Activated B cell treated with CpG ODN at 0.5 μM for 24 hours (primary cell): ENCODE measurements at regions of chr17 and their contacts with region 1.

Region 1: DNA sequence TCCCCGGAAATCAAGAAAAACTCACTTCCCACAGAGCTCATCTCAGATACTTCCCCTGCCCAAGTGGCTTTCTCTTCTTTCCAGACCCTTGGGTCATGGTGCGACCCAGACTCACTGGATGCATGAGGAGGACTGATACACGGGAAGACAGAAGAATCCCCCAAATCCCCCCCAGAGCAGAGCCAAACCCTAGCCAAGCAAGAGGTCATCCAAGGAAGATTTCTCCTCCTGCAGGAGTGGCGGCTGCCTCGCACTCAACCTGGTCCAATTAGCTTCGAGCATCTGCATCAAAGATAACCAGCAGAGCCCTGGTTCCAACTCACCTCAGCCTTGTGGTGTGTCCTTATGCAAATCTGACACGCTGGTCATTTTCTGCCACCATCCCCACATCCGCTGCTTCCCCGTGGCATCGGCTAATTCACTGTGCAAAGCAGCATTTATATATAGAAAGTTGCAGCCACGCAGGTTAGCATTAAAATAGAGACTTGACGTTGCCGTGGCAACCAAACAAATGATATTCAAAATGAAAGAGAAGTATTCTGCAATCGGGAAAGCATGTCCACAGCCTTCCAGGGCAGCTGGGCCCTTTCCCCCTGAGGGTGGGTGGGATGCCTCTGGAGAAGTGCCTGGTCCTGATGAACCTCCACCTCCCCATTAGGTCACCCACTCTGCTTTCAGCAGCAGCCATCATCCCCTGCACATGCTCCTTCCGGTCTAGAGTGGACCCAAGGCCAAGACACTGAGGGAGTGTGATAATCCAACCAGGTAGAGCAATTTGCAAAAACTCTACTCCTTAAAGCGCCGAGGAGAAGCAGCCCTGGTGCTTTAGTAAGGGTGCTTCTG is 138.8 kb downstream of the GAS7 start:
- DNase-seq: no peak
- ATAC-seq: peak; percentile 32
- H3K4me3 Mint-ChIP-seq: peak overlapping the region; percentile 20
- H3K27ac Mint-ChIP-seq: peak overlapping the region; percentile 77
- H3K4me1 Mint-ChIP-seq: peaks cover 58% of the 10 kb centered on the region
- H3K27me3 Mint-ChIP-seq: no peaks in the 10 kb centered on the region
- CTCF ChIP-seq: no peak

Region 2: GRCh38 chr17:9987779-9988574 is 71.6 kb before region 1 on chr17:
- CTCF ChIA-PET with region 1: no interaction called
- POLR2A ChIA-PET with region 1: no interaction called
- intact Hi-C with region 1: loop called (anchors 5 kb)
- DNase-seq: no peak
- ATAC-seq: peak; percentile 62
- H3K4me3 Mint-ChIP-seq: no peak overlapping the region
- H3K27ac Mint-ChIP-seq: no peak overlapping the region
- H3K4me1 Mint-ChIP-seq: peaks cover 10% of the 10 kb centered on the region
- H3K27me3 Mint-ChIP-seq: no peaks in the 10 kb centered on the region
- CTCF ChIP-seq: peak; percentile 72

Region 3: DNA sequence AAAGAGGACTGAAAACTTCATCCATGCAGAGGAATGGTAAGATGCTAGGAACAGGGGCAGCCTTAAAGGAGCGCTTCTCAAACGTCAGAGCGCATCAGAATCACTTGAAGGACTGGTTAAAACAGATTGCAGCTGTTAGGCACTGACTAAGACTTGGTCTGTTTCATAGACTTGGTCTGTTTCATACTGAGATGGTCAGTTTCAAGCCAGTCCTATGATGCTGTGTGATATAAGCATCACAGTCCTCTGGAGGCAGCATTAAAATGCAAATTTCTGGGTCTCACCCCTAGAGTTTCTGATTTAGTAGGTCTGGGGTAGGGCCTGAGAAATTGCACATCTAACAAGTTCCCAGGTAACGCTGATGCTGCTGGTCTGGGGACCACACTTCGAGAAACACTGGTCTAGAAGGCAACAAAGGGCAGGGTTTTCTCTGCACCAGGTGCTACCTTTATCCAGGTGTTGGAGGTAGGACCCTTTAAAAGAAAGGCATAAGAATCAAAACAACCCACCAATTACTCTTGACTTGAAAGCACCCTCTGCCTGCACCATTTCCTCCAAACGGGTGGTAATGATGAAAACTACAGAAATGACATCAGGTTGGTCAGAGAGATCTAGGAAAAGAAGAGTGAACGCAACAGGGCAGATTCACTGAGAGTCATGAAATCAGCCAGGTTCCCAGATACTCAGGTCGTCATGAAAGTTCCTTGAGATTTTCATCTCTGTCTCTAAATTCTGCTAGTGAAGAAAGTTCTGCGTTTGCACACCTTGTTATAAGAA is 59.5 kb before region 1 on chr17:
- CTCF ChIA-PET with region 1: no interaction called
- POLR2A ChIA-PET with region 1: no interaction called
- intact Hi-C with region 1: no loop called
- DNase-seq: no peak
- ATAC-seq: no peak
- H3K4me3 Mint-ChIP-seq: no peak overlapping the region
- H3K27ac Mint-ChIP-seq: no peak overlapping the region
- H3K4me1 Mint-ChIP-seq: no peaks in the 10 kb centered on the region
- H3K27me3 Mint-ChIP-seq: no peaks in the 10 kb centered on the region
- CTCF ChIP-seq: no peak

Region 4: DNA sequence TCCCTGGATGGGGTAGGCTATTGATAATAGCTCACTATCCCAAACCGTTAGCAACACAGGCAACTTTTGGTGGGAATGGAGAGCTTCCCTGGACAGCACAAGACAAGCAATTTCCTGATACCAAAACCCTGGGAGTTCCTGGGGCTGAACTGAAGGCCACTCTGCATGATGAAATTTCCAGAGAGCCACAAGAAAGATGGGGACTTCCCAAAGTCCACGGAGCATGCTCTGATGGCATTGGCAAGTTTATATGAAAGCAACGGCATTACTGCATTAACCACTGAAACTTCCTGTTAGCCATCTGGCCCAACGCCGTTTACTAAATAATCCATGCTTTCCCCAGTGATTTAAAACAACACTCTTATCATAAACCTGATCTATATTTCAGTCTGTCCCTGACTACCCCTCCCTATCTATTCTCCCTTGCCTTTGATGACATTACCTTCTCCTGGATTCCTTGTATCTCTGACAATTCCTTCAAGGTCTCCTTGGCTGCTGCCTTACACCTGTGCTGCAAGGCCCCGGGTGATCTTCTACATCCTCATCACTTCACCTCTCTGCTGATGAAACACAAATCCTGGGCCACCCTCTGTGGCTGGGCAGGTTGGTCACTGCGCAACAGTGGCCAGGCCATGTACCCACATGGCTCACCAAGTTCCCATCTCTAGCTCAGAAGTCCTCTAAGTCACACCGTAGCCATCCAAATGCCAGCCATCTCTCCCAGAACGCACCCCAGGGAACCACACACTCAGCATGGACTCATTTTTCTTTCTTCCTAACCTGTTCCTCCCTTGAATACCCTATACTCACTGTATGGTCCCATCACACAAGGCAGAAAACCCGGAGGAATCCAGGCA is 46.0 kb before region 1 on chr17:
- CTCF ChIA-PET with region 1: interaction called, 3 read pairs
- POLR2A ChIA-PET with region 1: interaction called, 3 read pairs
- intact Hi-C with region 1: loop called (anchors 1 kb)
- DNase-seq: no peak
- ATAC-seq: peak; percentile 62
- H3K4me3 Mint-ChIP-seq: peak overlapping the region; percentile 35
- H3K27ac Mint-ChIP-seq: peak overlapping the region; percentile 72
- H3K4me1 Mint-ChIP-seq: peaks cover 43% of the 10 kb centered on the region
- H3K27me3 Mint-ChIP-seq: no peaks in the 10 kb centered on the region
- CTCF ChIP-seq: no peak

Region 5: DNA sequence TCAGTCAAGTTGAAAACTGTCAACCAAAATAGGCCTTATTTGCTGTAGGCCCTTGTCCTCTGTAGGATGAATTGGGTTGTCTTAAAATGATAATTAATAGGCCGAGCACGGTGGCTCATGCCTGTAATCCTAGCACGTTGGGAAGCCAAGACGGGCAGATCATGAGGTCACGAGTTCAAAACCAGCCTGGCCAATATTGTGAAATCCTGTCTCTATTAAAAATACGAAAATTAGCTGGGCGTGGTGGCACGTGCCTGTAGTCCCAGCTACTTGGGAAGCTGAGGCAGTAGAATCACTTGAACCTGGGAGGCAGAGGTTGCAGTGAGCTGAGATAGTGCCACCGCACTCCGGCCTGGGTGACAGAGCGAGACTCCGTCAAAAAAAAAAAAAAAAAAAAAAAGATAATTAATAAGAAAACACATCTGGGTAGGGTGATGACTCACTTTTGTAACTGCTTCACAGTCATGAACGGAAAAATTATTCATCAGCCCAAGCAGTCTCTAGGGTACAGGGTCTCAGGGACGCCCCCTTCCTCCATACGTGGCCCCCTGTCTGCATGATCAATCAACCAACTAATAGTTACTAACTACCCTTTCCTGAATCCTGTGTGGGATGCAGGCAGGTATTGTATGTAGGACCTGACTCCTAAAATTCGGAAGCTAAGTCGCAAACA is 17.5 kb before region 1 on chr17:
- CTCF ChIA-PET with region 1: no interaction called
- POLR2A ChIA-PET with region 1: interaction called, 11 read pairs
- intact Hi-C with region 1: loop called (anchors 1 kb)
- DNase-seq: no peak
- ATAC-seq: peak; percentile 72
- H3K4me3 Mint-ChIP-seq: peak overlapping the region; percentile 30
- H3K27ac Mint-ChIP-seq: peak overlapping the region; percentile 84
- H3K4me1 Mint-ChIP-seq: peaks cover 55% of the 10 kb centered on the region
- H3K27me3 Mint-ChIP-seq: no peaks in the 10 kb centered on the region
- CTCF ChIP-seq: no peak

Region 6: GRCh38 chr17:10087081-10087754 is 27.6 kb after region 1 on chr17:
- CTCF ChIA-PET with region 1: no interaction called
- POLR2A ChIA-PET with region 1: interaction called, 3 read pairs
- intact Hi-C with region 1: loop called (anchors 2 kb)
- DNase-seq: no peak
- ATAC-seq: peak; percentile 49
- H3K4me3 Mint-ChIP-seq: no peak overlapping the region
- H3K27ac Mint-ChIP-seq: no peak overlapping the region
- H3K4me1 Mint-ChIP-seq: peaks cover 21% of the 10 kb centered on the region
- H3K27me3 Mint-ChIP-seq: no peaks in the 10 kb centered on the region
- CTCF ChIP-seq: no peak

Region 7: GRCh38 chr17:10149573-10150399 is 90.2 kb after region 1 on chr17:
- CTCF ChIA-PET with region 1: no interaction called
- POLR2A ChIA-PET with region 1: interaction called, 5 read pairs
- intact Hi-C with region 1: loop called (anchors 1 kb)
- DNase-seq: no peak
- ATAC-seq: peak; percentile 74
- H3K4me3 Mint-ChIP-seq: peak overlapping the region; percentile 69
- H3K27ac Mint-ChIP-seq: peak overlapping the region; percentile 85
- H3K4me1 Mint-ChIP-seq: peaks cover 54% of the 10 kb centered on the region
- H3K27me3 Mint-ChIP-seq: no peaks in the 10 kb centered on the region
- CTCF ChIP-seq: no peak